ENCODE measurements at regions of chr2 and their contacts with region 1.

Region 1: DNA sequence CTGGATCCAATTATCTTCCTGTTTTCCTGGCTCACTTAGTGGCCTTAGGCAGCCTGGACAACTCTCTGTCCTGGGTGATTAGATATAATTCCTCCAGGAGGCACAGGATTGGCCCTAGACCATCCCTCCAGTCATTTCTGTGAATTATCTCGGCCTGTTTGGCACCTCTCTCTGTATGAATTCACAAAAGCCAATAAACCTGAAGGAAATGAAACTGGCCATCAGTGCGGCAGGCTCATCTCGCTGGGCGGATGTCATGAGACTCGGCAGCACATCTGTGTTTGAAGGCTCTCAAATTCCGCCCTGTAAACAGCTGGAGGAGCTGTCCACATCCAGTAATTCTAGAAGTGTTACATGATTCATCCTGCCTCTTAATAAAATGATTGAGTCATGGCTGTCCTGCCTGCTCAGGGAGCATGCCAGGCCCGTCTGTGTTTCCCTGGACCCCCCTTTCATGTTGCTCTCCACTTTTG is 38.6 kb downstream of the ACOXL start:
- DNase-seq: peak; percentile 81
- ATAC-seq: peak; percentile 82
- H3K4me3 ChIP-seq: peak overlapping the region; percentile 41 to 44 (median 42)
- H3K27ac ChIP-seq: peak overlapping the region; percentile 73 to 88 (median 78)
- H3K4me1 ChIP-seq: peaks cover 36 to 39% of the 10 kb centered on the region in 2 donors
- H3K27me3 ChIP-seq: no peaks in the 10 kb centered on the region
- CTCF ChIP-seq: no peak
- POLR2A ChIP-seq: no peak

Region 2: DNA sequence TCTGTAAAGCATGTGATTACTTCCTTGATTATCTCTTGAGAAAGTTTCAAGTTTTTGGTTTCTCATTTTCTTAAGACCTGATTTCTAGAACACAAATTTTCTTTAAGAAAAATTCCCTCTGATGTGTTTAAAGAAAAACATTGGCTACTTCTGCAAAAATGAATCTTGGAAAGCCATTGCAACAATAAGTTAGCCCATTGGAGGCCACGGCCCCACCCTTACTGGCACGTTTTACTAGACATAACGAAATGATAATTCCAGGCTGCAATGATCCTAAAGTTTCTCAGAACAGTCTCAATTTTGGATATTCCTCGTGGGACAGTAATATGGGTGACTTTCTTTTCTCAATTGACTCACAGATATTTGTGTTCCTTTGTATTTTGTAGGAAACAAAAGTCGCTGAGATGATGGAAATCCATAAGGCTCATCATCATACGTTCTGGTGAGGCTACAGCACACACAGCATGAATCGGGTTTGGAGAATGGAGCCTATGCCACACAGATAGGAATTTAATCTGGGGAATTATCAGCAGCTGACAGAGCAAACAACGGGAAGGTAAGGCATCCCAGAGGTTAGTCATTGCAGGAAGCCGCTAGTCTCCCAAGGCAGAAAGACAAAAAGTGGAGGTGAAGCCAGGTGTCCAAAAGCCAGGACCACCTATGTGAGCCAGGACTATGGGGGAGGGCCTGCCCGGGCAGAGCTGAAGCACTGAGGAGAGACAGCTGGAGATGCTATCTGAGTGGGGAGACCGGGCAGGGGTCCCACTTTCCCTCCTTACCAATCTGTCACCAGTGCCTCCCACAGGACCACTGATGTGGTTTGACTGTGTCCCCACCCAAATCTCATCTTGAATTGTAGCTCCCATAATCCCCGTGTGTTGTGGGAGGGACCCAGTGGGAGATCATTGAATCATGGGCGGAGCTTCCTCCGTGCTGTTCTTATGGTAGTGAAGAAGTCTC is 1121.0 kb before region 1 on chr2:
- in situ Hi-C with region 1: no loop called
- intact Hi-C with region 1: no loop called
- DNase-seq: no peak
- ATAC-seq: no peak
- H3K4me3 ChIP-seq: no peak overlapping the region
- H3K27ac ChIP-seq: no peak overlapping the region
- H3K4me1 ChIP-seq: no peaks in the 10 kb centered on the region
- H3K27me3 ChIP-seq: no peaks in the 10 kb centered on the region
- CTCF ChIP-seq: no peak
- POLR2A ChIP-seq: no peak

Region 3: DNA sequence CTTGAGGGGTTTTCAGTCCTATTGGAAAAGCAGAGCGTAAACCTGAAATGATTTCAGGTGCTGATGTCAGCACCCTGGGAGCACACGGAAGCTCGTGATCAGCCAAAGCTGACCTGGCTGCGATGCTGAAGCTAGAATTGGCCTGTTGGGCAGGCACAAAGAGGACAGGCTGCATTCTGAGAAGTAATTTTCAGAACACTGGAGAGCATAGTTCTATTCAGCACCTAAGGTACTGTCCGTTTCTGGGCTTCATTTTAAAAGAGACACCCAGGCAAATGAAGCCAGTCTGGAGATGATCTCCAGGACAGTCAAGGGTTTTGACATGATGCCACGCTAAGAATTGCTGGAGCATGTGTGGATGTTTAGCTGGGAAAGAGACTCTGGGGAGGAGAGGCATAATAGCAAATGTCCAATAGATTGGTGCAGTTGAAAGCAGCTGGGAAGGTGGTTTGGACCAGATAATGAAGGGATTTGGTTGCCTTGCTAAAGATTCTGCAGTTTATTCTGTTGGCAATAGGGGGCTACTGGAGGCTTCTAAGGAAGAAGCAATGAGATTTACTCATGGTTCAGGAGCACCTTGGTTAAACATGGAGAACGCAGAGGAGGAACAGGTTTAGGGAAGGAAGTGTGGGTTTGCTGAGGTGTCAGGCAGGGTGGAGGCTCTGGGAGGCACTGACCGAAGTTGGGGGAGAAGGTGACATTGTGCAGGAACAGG is 47.9 kb after region 1 on chr2:
- in situ Hi-C with region 1: no loop called
- intact Hi-C with region 1: loop called (anchors 2 kb)
- DNase-seq: no peak
- ATAC-seq: no peak
- H3K4me3 ChIP-seq: no peak overlapping the region
- H3K27ac ChIP-seq: peak overlapping the region in 2 of 4 donors; percentile 55 to 97
- H3K4me1 ChIP-seq: peaks cover 38 to 45% of the 10 kb centered on the region in 2 donors
- H3K27me3 ChIP-seq: no peaks in the 10 kb centered on the region
- CTCF ChIP-seq: no peak
- POLR2A ChIP-seq: no peak

Region 4: GRCh38 chr2:110903548-110903947 is 132.6 kb after region 1 on chr2:
- in situ Hi-C with region 1: no loop called
- intact Hi-C with region 1: no loop called
- DNase-seq: peak in 1 of 2 donors; percentile 25
- ATAC-seq: peak in 1 of 2 donors; percentile 47
- H3K4me3 ChIP-seq: no peak overlapping the region
- H3K27ac ChIP-seq: no peak overlapping the region
- H3K4me1 ChIP-seq: no peaks in the 10 kb centered on the region
- H3K27me3 ChIP-seq: no peaks in the 10 kb centered on the region
- CTCF ChIP-seq: no peak
- POLR2A ChIP-seq: no peak

Region 5: DNA sequence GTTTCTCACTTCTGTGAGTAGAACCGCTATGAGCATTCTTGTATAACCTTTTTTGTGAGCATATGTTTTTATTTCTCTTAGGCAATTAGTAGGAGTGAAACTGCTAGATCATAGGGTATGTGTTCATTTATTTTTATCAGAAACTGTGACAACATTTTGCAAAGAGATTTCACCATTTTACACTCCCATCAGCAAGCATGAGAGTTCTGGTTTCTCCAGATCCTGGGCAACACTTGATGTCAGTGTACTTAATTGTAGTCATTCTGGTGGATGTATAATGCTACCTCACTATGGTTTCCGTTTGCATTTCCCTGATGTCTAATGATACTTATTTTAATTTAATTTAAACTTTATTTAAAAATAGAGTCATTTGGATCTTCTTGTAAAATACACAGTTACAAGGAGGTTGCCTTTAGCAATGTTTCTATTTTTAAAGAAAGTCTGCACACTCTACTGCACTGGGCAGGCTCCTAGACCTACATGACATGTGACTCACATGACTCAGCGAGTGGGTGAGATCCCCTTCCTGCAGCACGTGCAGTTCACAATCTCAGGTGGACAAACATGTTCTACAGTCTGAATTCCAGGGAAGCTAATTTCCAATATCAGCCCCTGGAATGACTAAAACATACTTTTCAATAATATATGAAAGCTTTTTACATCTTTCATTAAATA is 222.7 kb after region 1 on chr2:
- in situ Hi-C with region 1: no loop called
- intact Hi-C with region 1: loop called (anchors 10 kb)
- DNase-seq: peak; percentile 36 to 63
- ATAC-seq: peak; percentile 96 to 99
- H3K4me3 ChIP-seq: no peak overlapping the region
- H3K27ac ChIP-seq: no peak overlapping the region
- H3K4me1 ChIP-seq: peaks cover 0 to 4% of the 10 kb centered on the region in 2 donors
- H3K27me3 ChIP-seq: no peaks in the 10 kb centered on the region
- CTCF ChIP-seq: no peak
- POLR2A ChIP-seq: no peak

Region 6: GRCh38 chr2:111135910-111136297 is 364.9 kb after region 1 on chr2:
- in situ Hi-C with region 1: no loop called
- intact Hi-C with region 1: loop called (anchors 2 kb)
- DNase-seq: peak; percentile 53 to 79
- ATAC-seq: peak; percentile 61 to 68
- H3K4me3 ChIP-seq: no peak overlapping the region
- H3K27ac ChIP-seq: peak overlapping the region; percentile 61 to 74 (median 62)
- H3K4me1 ChIP-seq: peaks cover 44 to 67% of the 10 kb centered on the region in 2 donors
- H3K27me3 ChIP-seq: no peaks in the 10 kb centered on the region
- CTCF ChIP-seq: peak; percentile 45 to 70 (median 63)
- POLR2A ChIP-seq: no peak

Region 7: DNA sequence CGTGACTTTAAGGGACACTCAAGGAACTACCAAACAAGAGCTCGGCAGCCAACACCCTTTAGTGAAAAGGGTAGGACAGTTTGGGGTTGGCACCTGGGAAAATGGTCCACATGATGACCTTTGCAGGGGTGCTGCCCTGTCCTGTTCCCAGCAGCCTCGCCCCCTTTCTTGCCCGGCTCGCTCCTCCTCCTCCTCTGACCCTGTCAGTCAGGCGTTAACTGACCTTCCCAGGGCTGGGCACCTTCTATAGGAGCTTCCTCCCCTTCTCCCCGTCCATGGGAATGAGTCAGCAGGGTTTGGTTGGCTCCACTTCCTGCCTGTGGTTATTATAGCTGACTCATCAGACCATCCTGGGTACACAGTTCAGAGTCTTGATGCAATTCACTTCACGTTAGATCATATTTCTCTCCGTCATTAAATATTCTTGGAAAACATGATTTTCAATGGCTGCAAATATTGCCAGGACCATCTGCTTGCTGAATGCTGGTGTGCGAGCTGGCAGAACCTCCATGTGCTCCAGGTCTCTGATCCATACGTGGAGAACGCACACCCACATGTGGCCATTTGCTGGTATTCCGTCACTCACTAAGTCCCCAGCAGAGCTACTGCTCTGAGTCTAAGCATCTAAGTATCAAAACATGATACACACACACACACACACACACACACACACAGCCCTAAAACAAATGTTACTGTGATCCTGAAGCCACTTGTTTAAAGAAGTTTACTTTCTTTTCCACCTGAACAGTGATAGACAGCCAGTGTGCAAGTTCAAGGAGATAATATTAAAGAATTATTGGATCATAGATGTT is 928.0 kb after region 1 on chr2:
- in situ Hi-C with region 1: loop called in 1 of 4 experiments (anchors 25 kb)
- intact Hi-C with region 1: loop called (anchors 5 kb)
- DNase-seq: peak; percentile 79 to 90
- ATAC-seq: peak; percentile 86 to 87
- H3K4me3 ChIP-seq: peak overlapping the region in 2 of 4 donors; percentile 10 to 35
- H3K27ac ChIP-seq: peak overlapping the region; percentile 39 to 73 (median 70)
- H3K4me1 ChIP-seq: peaks cover 24 to 27% of the 10 kb centered on the region in 2 donors
- H3K27me3 ChIP-seq: no peaks in the 10 kb centered on the region
- CTCF ChIP-seq: peak in 1 of 5 experiments; percentile 32
- POLR2A ChIP-seq: peak in 1 of 2 donors; percentile 23

Measured in gastrocnemius medialis (tissue), 4 donors.